Calu3 (cell line): ENCODE measurements at regions of chr5 and their contacts with region 1.

Region 1: DNA sequence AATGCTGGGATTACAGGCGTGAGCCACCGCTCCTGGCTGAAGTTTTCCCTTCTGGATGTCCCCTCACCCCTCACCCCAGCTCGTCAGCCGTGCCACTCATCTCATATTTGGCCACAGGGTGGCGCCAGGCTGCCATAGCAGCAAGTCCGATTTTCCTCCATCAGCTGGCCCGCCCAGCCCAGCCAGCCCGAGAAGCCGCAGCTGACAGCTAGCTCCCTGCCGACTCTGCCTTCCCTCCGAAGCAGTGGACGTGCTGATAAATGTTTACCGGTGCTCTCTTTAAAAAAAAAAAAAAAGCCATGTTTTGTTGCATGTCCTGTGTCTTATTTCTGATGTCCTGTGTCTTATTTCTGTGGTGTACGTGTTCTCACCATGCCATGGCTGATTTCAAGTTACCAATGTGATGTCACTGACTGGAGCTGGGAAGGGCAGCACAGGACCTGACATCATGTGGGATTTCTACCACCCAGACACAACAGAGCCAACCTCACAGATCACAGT is 58.3 kb downstream of the PFDN1 start:
- DNase-seq: peak; percentile 92
- H3K4me3 Mint-ChIP-seq: no peak overlapping the region
- H3K27ac Mint-ChIP-seq: peak overlapping the region; percentile 67
- H3K4me1 Mint-ChIP-seq: peaks cover 31% of the 10 kb centered on the region
- H3K27me3 Mint-ChIP-seq: no peaks in the 10 kb centered on the region
- CTCF ChIP-seq: peak; percentile 83

Region 2: GRCh38 chr5:140351609-140352334 is 107.2 kb after region 1 on chr5:
- CTCF ChIA-PET with region 1: interaction called, 169 read pairs
- intact Hi-C with region 1: loop called (anchors 1 kb)
- DNase-seq: peak; percentile 91
- H3K4me3 Mint-ChIP-seq: no peak overlapping the region
- H3K27ac Mint-ChIP-seq: no peak overlapping the region
- H3K4me1 Mint-ChIP-seq: peaks cover 32% of the 10 kb centered on the region
- H3K27me3 Mint-ChIP-seq: no peaks in the 10 kb centered on the region
- CTCF ChIP-seq: peak; percentile 84

Region 3: DNA sequence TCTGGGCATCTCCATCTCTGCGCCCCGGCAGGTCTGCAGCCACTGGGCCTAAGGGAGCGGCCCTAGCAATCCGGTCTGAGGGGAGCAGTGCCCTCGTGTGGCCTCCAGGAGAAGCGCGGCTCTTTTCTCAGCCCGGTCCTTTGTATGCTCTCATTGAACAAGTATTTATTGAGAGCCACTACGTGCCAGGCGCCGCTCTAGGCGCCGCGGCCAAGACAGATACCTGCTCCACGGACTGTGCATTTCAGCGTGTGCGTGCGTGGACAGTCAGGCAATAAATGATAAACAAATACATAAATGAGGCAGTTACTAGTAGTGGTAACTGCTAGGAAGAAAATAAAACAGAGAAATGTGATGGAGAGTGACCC is 113.1 kb after region 1 on chr5:
- CTCF ChIA-PET with region 1: interaction called, 35 read pairs
- intact Hi-C with region 1: loop called (anchors 1 kb)
- DNase-seq: peak; percentile 90
- H3K4me3 Mint-ChIP-seq: peak overlapping the region; percentile 41
- H3K27ac Mint-ChIP-seq: peak overlapping the region; percentile 38
- H3K4me1 Mint-ChIP-seq: peaks cover 17% of the 10 kb centered on the region
- H3K27me3 Mint-ChIP-seq: no peaks in the 10 kb centered on the region
- CTCF ChIP-seq: peak; percentile 90

Region 4: GRCh38 chr5:140420226-140420570 is 175.6 kb after region 1 on chr5:
- CTCF ChIA-PET with region 1: no interaction called
- intact Hi-C with region 1: no loop called
- DNase-seq: no peak
- H3K4me3 Mint-ChIP-seq: no peak overlapping the region
- H3K27ac Mint-ChIP-seq: no peak overlapping the region
- H3K4me1 Mint-ChIP-seq: peaks cover 13% of the 10 kb centered on the region
- H3K27me3 Mint-ChIP-seq: no peaks in the 10 kb centered on the region
- CTCF ChIP-seq: no peak

Region 5: DNA sequence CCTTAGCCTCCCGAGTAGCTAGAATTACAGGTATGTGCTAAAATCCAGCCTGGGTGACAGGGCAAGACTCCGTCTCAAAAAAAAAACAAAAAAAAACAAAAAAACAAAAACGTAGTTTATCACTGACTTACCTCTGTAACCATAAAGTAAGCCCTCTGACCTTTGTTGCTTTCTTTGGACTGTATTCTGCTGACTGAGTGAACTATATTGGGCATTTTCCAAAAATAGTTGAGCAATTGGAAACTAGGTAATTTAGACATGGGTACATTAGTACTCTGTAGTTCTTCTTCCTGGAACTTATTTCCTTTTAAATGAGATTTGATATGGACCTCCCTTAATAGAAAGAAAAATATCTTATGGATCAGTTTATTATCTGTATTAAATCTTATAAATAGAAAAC is 223.6 kb after region 1 on chr5:
- CTCF ChIA-PET with region 1: no interaction called
- intact Hi-C with region 1: no loop called
- DNase-seq: no peak
- H3K4me3 Mint-ChIP-seq: no peak overlapping the region
- H3K27ac Mint-ChIP-seq: no peak overlapping the region
- H3K4me1 Mint-ChIP-seq: no peaks in the 10 kb centered on the region
- H3K27me3 Mint-ChIP-seq: no peaks in the 10 kb centered on the region
- CTCF ChIP-seq: no peak